ENCODE measurements at regions of chr19 and their contacts with region 1.

Region 1: GRCh38 chr19:56076498-56076897 is 44.6 kb downstream of the ZNF787 start:
- DNase-seq: peak in 3 of 6 donors; percentile 28 to 69 (median 68)
- ATAC-seq: peak; percentile 51 to 76 (median 67)
- H3K4me3 ChIP-seq: no peak overlapping the region
- H3K27ac ChIP-seq: no peak overlapping the region
- H3K4me1 ChIP-seq: peaks cover 0 to 6% (median 0%) of the 10 kb centered on the region in 3 donors
- H3K27me3 ChIP-seq: no peaks in the 10 kb centered on the region
- CTCF ChIP-seq: peak; percentile 52 to 81 (median 71)

Region 2: GRCh38 chr19:55986487-55986886 is 90.0 kb before region 1 on chr19 and contains the start of gene NLRP5:
- intact Hi-C with region 1: no loop called
- DNase-seq: no peak
- ATAC-seq: no peak
- H3K4me3 ChIP-seq: no peak within 1 kb of the TSS
- H3K27ac ChIP-seq: no peak within 1 kb of the TSS
- H3K4me1 ChIP-seq: no peaks in the 10 kb centered on the region
- H3K27me3 ChIP-seq: no peaks in the 10 kb centered on the region
- CTCF ChIP-seq: no peak
- total RNA-seq, gene NLRP5: not detected

Region 3: GRCh38 chr19:56252699-56253422 is 176.4 kb after region 1 on chr19:
- intact Hi-C with region 1: loop called in 1 of 3 experiments (anchors 10 kb)
- DNase-seq: peak; percentile 65 to 92 (median 82)
- ATAC-seq: peak; percentile 87 to 99 (median 96)
- H3K4me3 ChIP-seq: no peak overlapping the region
- H3K27ac ChIP-seq: no peak overlapping the region
- H3K4me1 ChIP-seq: no peaks in the 10 kb centered on the region
- H3K27me3 ChIP-seq: no peaks in the 10 kb centered on the region
- CTCF ChIP-seq: peak; percentile 72 to 87 (median 75)

Region 4: DNA sequence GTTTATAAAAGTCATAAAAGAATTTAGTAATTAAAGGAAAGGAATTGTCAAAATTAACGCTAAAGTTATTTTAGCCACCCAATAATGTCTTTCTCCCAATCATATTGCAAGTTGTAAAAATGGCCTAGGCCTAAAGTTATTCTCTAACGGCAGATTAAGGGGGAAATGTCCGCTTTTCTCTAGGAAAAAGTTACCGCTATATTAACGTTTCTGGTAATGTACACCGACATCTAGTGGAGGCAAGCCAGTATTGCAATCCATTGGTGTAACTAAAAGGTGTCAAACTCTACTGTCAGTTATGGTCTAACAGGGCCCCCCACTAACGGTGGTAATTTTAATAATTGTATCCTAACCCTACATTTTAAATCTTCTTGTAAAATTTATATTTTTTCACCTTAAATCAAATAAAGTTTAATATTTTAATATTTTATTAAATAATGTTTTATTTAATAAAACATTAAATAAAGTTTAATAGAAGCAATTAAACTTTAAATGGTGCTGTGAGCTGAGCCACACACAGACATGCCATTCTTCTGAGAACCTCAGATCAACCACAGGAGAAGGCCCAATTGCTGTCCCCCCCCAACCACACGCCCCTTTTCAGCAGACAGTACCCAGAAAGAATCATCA is 274.0 kb after region 1 on chr19:
- intact Hi-C with region 1: loop called in 1 of 3 experiments (anchors 10 kb)
- DNase-seq: peak in 3 of 6 donors; percentile 13 to 41 (median 17)
- ATAC-seq: peak in 3 of 4 donors; percentile 56 to 64 (median 62)
- H3K4me3 ChIP-seq: no peak overlapping the region
- H3K27ac ChIP-seq: no peak overlapping the region
- H3K4me1 ChIP-seq: no peaks in the 10 kb centered on the region
- H3K27me3 ChIP-seq: no peaks in the 10 kb centered on the region
- CTCF ChIP-seq: peak; percentile 59 to 77 (median 74)

Measured in pancreas (tissue), 10 donors.